Activated CD8-positive, alpha-beta memory T cell treated with anti-CD3 and anti-CD28 coated beads, Interleukin-2, amount 10 ng/mL, durations not matched to agents 7 days and 5 days (primary cell): ENCODE measurements at regions of chr15 and their contacts with region 1.

Region 1: GRCh38 chr15:101258238-101259144 is 6.6 kb upstream of the CHSY1 start:
- DNase-seq: peak; percentile 69
- ATAC-seq: peak; percentile 71
- H3K4me3 Mint-ChIP-seq: no peak overlapping the region
- H3K27ac Mint-ChIP-seq: no peak overlapping the region
- H3K4me1 Mint-ChIP-seq: peaks cover 34% of the 10 kb centered on the region
- H3K27me3 Mint-ChIP-seq: peaks cover 21% of the 10 kb centered on the region

Region 2: GRCh38 chr15:101014921-101015841 is 243.3 kb before region 1 on chr15:
- CTCF ChIA-PET with region 1: interaction called, 108 read pairs
- DNase-seq: peak; percentile 76
- ATAC-seq: peak; percentile 76
- H3K4me3 Mint-ChIP-seq: no peak overlapping the region
- H3K27ac Mint-ChIP-seq: no peak overlapping the region
- H3K4me1 Mint-ChIP-seq: no peaks in the 10 kb centered on the region
- H3K27me3 Mint-ChIP-seq: peaks cover 12% of the 10 kb centered on the region

Region 3: DNA sequence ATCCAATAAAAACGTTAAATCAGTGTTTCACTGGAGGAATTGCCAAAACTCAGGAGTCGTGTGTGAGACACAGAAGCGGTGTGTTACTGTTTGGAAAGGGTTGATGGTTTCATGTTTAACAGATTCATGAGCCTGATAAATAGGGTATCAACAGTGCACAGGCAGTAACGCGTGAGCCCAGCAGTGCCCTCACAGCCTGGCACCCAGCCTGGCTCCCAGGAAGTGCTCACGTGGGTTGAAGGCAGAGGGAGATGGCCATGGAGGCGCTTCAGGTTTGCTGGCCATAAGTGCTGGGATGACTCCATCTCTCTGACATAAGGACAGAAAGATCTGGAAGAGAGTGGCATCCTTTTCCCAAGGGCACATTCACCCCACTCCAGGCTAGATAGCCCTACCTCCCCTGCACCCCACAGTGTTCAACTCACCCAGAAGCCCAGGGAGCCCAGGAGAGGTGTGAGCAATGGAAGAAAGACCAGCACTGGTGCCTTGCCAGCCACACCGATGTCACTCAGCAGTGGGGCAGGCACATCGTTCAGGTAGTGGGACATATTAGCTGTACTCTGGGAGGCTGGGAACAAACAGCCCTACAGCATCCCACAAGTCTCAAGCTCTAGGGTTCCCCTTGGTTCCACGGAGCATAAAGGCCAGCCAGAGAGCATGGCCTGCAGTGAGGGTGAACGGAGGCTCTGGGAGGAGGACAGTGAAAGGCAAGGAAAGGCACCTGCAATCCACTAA is 175.0 kb before region 1 on chr15:
- CTCF ChIA-PET with region 1: interaction called, 244 read pairs
- DNase-seq: no peak
- ATAC-seq: no peak
- H3K4me3 Mint-ChIP-seq: no peak overlapping the region
- H3K27ac Mint-ChIP-seq: no peak overlapping the region
- H3K4me1 Mint-ChIP-seq: no peaks in the 10 kb centered on the region
- H3K27me3 Mint-ChIP-seq: peaks cover 9% of the 10 kb centered on the region

Region 4: DNA sequence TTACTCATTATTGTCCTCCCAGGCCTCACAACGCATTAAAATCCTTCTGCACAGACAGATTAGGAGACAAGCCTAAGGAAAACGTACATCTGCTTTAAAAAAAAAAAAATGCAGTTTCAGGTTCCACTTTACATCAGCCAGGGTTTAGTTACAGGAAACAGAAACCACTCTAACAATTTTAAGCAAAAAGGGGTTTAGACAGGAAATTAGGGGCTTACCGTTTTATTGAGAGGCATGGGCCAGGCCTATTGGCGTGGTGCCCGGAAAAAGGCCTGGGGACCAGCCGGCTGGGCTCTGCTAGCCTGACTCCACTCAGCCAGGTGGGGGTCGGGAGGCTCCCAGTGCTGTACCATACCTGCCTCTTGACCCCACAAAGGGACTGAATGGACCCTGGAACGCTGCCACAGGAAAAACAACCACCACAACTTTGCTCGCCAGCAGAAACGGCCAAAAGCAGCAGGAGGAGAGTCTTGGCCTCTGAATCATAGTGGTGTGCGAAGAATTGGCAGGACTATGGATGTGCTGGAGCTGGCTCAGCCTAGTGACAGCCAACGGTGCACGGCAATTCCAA is 130.9 kb before region 1 on chr15:
- CTCF ChIA-PET with region 1: interaction called, 20 read pairs
- DNase-seq: peak; percentile 77
- ATAC-seq: peak; percentile 73
- H3K4me3 Mint-ChIP-seq: peak overlapping the region; percentile 69
- H3K27ac Mint-ChIP-seq: peak overlapping the region; percentile 98
- H3K4me1 Mint-ChIP-seq: peaks cover 72% of the 10 kb centered on the region
- H3K27me3 Mint-ChIP-seq: no peaks in the 10 kb centered on the region